MCF 10A (cell line): ENCODE measurements at regions of chr1 and their contacts with region 1.

Region 1: DNA sequence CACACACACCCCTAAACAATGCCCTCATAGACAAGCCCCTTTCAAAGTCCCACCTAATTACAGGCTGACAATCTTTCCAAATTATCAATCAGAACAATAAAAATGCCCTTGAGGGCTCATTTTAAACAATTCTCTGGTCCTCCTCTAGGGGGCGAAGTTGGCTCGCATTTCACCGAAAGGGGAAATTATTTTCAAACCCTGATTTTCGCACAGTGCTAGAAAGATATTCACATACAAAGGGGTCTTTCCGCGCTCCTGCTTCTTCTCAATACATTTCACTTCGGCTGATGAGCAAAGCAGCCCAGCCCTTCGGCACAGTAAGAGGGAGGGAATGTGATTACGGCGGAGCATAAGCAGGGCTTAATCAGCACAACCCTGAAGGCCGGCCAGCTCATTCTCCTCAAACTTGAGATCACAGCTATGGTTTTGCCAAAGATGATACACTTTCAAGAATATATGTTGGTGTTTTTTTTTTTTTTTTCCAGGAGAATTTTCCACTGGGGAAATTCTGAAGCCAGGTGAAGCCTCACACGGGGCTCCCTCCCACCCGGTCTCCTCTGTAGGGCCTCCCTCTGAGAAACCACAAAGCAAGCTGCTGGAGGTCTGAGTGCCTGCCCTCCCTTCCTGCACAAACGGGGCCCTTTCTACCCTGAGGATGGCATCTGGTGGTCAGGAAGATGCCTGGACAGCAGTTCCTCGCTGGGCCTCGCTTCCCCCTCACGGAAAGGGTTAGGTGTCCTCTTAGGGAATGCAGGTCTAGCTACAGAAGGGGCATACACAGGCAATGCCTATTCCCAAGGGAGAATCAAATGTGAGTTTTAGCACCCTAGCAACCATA is 66.9 kb downstream of the GNG12 start:
- DNase-seq: peak; percentile 63
- H3K4me3 Mint-ChIP-seq: peak overlapping the region; percentile 0
- H3K27ac Mint-ChIP-seq: peak overlapping the region; percentile 57
- H3K4me1 Mint-ChIP-seq: peaks cover 17% of the 10 kb centered on the region
- H3K27me3 Mint-ChIP-seq: no peaks in the 10 kb centered on the region
- CTCF ChIP-seq: peak; percentile 84

Region 2: DNA sequence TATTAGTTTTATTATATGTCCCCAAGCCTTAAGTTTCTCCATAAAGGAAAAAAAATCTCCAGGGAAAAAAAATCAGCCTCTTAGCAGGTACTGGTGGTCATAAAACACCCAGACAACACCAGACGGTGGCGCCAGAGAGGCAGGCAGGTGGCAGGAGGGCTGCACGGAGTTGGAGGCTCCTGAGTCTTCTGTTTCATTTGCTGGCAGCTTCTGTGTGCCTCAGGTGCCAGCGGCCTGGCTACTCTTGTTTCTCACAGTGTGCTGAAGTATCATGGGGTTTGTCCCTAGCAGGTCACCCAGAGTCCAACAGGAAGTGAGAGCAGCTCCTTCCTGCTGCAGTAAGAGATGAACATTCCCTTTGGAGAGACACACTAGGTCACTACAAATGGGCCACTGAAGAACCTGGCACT is 204.7 kb before region 1 on chr1:
- CTCF ChIA-PET with region 1: interaction called, 98 read pairs
- POLR2A ChIA-PET with region 1: interaction called, 20 read pairs
- intact Hi-C with region 1: no loop called
- DNase-seq: peak; percentile 90
- H3K4me3 Mint-ChIP-seq: no peak overlapping the region
- H3K27ac Mint-ChIP-seq: no peak overlapping the region
- H3K4me1 Mint-ChIP-seq: peaks cover 6% of the 10 kb centered on the region
- H3K27me3 Mint-ChIP-seq: no peaks in the 10 kb centered on the region
- CTCF ChIP-seq: peak; percentile 95

Region 3: GRCh38 chr1:67785847-67786753 is 19.7 kb after region 1 on chr1:
- CTCF ChIA-PET with region 1: interaction called, 28 read pairs
- POLR2A ChIA-PET with region 1: no interaction called
- intact Hi-C with region 1: no loop called
- DNase-seq: no peak
- H3K4me3 Mint-ChIP-seq: no peak overlapping the region
- H3K27ac Mint-ChIP-seq: no peak overlapping the region
- H3K4me1 Mint-ChIP-seq: peaks cover 40% of the 10 kb centered on the region
- H3K27me3 Mint-ChIP-seq: no peaks in the 10 kb centered on the region
- CTCF ChIP-seq: no peak

Region 4: GRCh38 chr1:67821263-67821662 is 54.9 kb after region 1 on chr1:
- CTCF ChIA-PET with region 1: interaction called, 53 read pairs
- POLR2A ChIA-PET with region 1: interaction called, 4 read pairs
- intact Hi-C with region 1: no loop called
- DNase-seq: no peak
- H3K4me3 Mint-ChIP-seq: no peak overlapping the region
- H3K27ac Mint-ChIP-seq: no peak overlapping the region
- H3K4me1 Mint-ChIP-seq: peaks cover 56% of the 10 kb centered on the region
- H3K27me3 Mint-ChIP-seq: no peaks in the 10 kb centered on the region
- CTCF ChIP-seq: no peak

Region 5: DNA sequence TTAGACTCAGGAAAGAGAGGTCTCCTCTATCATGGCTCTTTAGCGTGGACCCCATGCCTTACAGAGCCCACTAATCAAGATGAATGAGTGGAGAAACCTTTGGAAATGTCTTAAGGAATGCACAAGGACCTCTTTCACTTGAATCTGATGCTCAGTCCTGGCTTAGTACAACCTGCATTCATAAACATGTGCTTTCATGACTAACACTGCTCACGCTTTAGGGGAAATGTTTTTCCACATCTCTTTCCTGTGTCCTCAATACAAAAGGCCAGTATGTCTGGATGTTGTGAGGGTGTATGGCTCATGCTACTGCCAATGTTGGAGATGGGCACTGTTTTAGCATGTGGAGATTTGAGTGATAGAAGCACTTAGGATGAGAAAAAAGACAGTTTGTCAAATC is 81.1 kb after region 1 on chr1:
- CTCF ChIA-PET with region 1: interaction called, 70 read pairs
- POLR2A ChIA-PET with region 1: interaction called, 4 read pairs
- intact Hi-C with region 1: loop called (anchors 1 kb)
- DNase-seq: no peak
- H3K4me3 Mint-ChIP-seq: no peak overlapping the region
- H3K27ac Mint-ChIP-seq: no peak overlapping the region
- H3K4me1 Mint-ChIP-seq: peaks cover 29% of the 10 kb centered on the region
- H3K27me3 Mint-ChIP-seq: no peaks in the 10 kb centered on the region
- CTCF ChIP-seq: no peak

Region 6: DNA sequence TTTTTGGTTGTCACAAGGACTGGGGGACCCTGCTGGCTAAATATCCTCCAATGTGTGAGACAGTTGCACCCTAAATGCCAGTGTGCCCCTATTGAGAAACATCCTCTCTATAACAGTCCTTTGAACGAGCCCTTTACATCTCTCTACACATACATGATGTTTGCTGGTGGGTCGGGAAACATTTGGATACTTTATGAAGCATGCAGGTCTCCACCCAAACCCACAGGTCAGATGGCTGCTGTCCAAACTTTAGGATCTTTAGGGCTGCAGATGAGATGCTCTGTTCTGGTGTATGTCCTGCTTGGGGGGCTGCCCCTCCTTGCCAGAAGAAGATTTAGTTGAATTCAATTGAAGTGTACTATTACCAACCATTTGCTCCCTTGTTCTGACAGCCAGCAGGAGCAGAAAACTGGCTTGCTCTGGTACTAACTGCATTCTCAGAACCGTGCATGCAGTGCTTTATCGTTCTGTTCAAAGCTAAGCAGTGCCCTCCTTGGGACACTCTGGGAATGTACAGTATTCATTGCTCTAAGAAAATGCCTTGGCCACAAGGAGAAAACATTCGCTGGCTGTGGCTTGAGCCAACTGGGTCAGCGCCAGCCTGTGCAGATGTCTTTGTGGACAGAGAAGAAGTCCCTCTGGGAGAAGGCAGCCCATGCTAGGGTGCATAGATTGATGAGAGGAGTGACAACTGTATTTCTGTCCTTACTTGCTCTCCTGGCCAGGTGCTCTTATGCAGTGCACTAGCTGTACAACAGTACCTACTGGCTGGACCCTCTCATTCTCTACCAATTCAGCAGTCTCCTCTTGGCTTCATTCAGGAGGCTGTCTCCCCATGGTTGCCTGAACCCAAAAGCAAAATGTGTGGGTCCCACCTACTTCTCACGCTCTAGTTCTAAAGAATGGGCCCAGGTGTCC is 345.4 kb after region 1 on chr1:
- CTCF ChIA-PET with region 1: interaction called, 37 read pairs
- POLR2A ChIA-PET with region 1: interaction called, 3 read pairs
- intact Hi-C with region 1: loop called (anchors 1 kb)
- DNase-seq: peak; percentile 79
- H3K4me3 Mint-ChIP-seq: no peak overlapping the region
- H3K27ac Mint-ChIP-seq: no peak overlapping the region
- H3K4me1 Mint-ChIP-seq: peaks cover 19% of the 10 kb centered on the region
- H3K27me3 Mint-ChIP-seq: no peaks in the 10 kb centered on the region
- CTCF ChIP-seq: peak; percentile 65

Region 7: GRCh38 chr1:68401511-68401910 is 635.2 kb after region 1 on chr1:
- CTCF ChIA-PET with region 1: no interaction called
- POLR2A ChIA-PET with region 1: no interaction called
- intact Hi-C with region 1: no loop called
- DNase-seq: no peak
- H3K4me3 Mint-ChIP-seq: no peak overlapping the region
- H3K27ac Mint-ChIP-seq: no peak overlapping the region
- H3K4me1 Mint-ChIP-seq: peaks cover 19% of the 10 kb centered on the region
- H3K27me3 Mint-ChIP-seq: peaks cover 18% of the 10 kb centered on the region
- CTCF ChIP-seq: no peak